Endothelial cell of umbilical vein (primary cell): ENCODE measurements at regions of chr1 and their contacts with region 1.

Region 1: GRCh38 chr1:35777109-35777508 is 7.3 kb upstream of the CLSPN start:
- DNase-seq: no peak
- H3K4me3 ChIP-seq: no peak overlapping the region
- H3K27ac ChIP-seq: no peak overlapping the region
- H3K4me1 ChIP-seq: no peaks in the 10 kb centered on the region
- H3K27me3 ChIP-seq: no peaks in the 10 kb centered on the region
- CTCF ChIP-seq: no peak
- POLR2A ChIP-seq: no peak

Region 2: GRCh38 chr1:35577071-35577998 is 199.8 kb before region 1 on chr1:
- CTCF ChIA-PET with region 1: interaction called, 17 read pairs
- POLR2A ChIA-PET with region 1: no interaction called
- dilution Hi-C with region 1: no loop called
- intact Hi-C with region 1: no loop called
- DNase-seq: peak; percentile 37
- H3K4me3 ChIP-seq: peak overlapping the region in 1 of 3 experiments; percentile 9
- H3K27ac ChIP-seq: no peak overlapping the region
- H3K4me1 ChIP-seq: peaks cover 9% of the 10 kb centered on the region
- H3K27me3 ChIP-seq: peaks cover 30 to 52% of the 10 kb centered on the region in 2 experiments
- CTCF ChIP-seq: no peak
- POLR2A ChIP-seq: no peak